Naive thymus-derived CD4-positive, alpha-beta T cell (primary cell): ENCODE measurements at regions of chr1 and their contacts with region 1.

Region 1: DNA sequence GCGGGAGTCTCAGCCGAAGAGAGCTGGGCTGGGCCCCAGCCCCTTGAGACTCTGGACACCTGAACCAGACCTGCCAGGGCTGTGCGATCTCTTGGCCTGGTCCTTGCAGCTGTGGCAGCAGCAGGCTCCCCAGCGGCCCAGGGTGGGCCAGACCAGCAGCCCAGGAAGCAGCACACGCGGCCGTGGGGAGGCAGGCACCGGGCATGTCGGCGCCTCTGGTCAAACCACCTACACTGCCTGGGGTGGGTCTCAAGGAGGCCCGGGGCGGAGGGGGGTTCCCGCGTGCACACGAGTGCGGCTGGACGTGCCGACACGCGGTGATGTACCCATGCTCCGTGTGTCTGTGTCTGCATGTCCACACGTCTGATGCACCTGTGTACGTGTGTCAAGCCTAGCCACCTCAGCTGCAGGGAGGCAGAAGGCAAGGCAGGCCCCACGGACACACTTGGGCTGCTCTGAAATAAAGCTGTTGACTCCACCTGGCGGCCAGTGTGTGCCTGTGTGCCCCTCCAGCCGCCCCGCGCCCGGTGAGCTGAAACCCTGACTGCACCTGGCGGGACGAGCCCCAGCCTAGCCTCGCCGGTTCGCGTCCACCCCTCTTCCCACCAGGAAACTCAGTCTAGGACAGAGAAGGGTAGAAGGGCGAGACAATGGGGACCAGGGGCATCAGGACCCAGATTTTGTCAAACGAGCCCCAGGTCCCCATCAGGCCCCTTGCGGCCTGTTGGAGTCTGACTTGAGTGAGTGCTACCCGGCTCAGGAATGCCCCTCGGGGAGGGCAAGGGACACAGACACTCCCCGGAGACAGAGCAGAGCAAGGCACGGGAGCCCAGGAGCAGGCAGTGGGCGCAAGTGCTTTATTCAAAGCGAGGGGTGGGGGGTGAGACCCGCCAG is 11.6 kb downstream of the SCNN1D start:
- DNase-seq: peak; percentile 51 to 71 (median 58)
- ATAC-seq: peak; percentile 76
- H3K4me3 ChIP-seq: no peak overlapping the region
- H3K4me3 Mint-ChIP-seq: no peak overlapping the region
- H3K27ac ChIP-seq: no peak overlapping the region
- H3K27ac Mint-ChIP-seq: peak overlapping the region in 1 of 9 donors; percentile 14
- H3K4me1 ChIP-seq: no peaks in the 10 kb centered on the region
- H3K4me1 Mint-ChIP-seq: peaks cover 0 to 4% (median 0%) of the 10 kb centered on the region in 7 donors
- H3K27me3 ChIP-seq: no peaks in the 10 kb centered on the region
- H3K27me3 Mint-ChIP-seq: no peaks in the 10 kb centered on the region

Region 2: DNA sequence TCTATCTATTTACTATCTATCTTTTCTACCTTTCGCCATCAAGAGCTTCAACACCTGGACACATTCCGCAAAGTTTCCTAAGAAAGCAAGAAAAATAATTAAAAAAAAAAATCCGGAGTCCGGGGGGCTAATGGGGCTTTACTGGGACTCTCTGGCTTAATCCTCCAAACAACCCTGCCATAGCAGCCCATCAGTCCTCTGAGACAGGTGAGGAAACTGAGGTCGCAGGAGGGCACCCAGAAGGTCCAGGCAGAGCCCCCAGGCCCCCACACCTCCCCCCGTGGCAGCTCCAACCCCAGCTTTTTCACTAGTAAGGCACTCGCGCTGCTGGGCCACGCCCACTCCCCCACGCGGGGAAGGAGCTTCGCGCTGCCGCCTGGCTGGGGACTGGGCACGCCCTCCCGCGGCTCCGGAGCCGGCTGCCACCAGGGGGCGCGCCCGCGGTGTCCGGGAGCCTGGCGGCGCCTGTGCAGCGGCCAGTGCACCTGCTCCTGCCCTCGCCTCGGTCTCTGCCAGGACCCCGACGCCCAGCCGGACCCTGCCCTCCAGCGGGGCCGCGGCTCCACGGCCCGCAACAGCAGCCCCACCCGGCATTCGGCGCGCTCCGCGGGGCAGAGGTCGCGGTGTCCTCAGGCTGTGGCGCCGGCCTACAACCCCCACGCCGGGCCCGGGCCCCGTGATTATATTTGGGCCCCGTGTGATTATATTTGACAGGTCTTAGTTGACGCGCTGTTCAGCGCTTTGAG is 422.1 kb before region 1 on chr1:
- CTCF ChIA-PET with region 1: no interaction called
- POLR2A ChIA-PET with region 1: no interaction called
- intact Hi-C with region 1: no loop called
- DNase-seq: peak; percentile 77 to 91 (median 85)
- ATAC-seq: peak; percentile 100
- H3K4me3 ChIP-seq: no peak overlapping the region
- H3K4me3 Mint-ChIP-seq: peak overlapping the region in 5 of 10 donors; percentile 27 to 55 (median 45)
- H3K27ac ChIP-seq: no peak overlapping the region
- H3K27ac Mint-ChIP-seq: no peak overlapping the region
- H3K4me1 ChIP-seq: peaks cover 0 to 4% of the 10 kb centered on the region in 2 donors
- H3K4me1 Mint-ChIP-seq: peaks cover 0 to 10% (median 6%) of the 10 kb centered on the region in 7 donors
- H3K27me3 ChIP-seq: no peaks in the 10 kb centered on the region
- H3K27me3 Mint-ChIP-seq: peaks cover 0 to 27% (median 12%) of the 10 kb centered on the region in 5 donors

Region 3: DNA sequence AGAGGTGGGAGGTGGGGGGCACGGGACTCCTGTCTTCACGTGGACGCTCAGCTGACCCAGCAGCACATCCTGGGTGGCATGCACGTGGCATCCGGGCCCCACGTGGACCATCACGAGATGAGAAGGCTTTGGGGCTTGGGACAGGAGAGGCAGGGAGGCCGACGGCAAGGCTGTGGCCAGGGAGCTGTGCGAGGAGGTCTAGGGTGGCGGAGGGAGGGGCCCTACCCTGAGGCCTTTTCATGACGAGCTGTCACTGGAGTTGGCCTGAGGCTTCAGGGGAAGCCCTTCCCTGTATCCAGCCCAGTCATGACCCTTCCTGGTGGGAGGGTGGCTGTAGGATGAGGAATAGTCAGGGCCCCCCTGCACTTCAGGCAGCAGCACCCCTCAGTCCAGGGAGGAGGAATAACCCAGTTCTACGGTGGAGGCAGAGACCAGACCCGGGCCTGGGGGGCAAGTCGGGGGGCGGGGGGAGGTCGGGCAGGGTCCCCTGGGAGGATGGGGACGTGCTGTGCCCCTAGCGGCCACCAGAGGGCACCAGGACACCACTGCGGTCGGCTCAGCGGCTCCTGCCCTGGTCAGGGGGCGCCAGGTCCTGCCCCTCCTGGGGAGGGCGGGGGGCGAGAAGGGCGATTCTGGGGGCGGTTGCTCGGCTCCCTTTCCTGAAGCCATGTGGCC is 307.9 kb before region 1 on chr1:
- CTCF ChIA-PET with region 1: interaction called, 4 read pairs
- POLR2A ChIA-PET with region 1: no interaction called
- intact Hi-C with region 1: loop called (anchors 2 to 5 kb)
- DNase-seq: peak in 7 of 9 donors; percentile 47 to 71 (median 62)
- ATAC-seq: peak; percentile 85
- H3K4me3 ChIP-seq: no peak overlapping the region
- H3K4me3 Mint-ChIP-seq: no peak overlapping the region
- H3K27ac ChIP-seq: no peak overlapping the region
- H3K27ac Mint-ChIP-seq: no peak overlapping the region
- H3K4me1 ChIP-seq: no peaks in the 10 kb centered on the region
- H3K4me1 Mint-ChIP-seq: peaks cover 0 to 2% (median 0%) of the 10 kb centered on the region in 7 donors
- H3K27me3 ChIP-seq: no peaks in the 10 kb centered on the region
- H3K27me3 Mint-ChIP-seq: peaks cover 7 to 38% (median 26%) of the 10 kb centered on the region in 5 donors